Ovary (tissue), 10 donors: ENCODE measurements at regions of chr15 and their contacts with region 1.

Region 1: DNA sequence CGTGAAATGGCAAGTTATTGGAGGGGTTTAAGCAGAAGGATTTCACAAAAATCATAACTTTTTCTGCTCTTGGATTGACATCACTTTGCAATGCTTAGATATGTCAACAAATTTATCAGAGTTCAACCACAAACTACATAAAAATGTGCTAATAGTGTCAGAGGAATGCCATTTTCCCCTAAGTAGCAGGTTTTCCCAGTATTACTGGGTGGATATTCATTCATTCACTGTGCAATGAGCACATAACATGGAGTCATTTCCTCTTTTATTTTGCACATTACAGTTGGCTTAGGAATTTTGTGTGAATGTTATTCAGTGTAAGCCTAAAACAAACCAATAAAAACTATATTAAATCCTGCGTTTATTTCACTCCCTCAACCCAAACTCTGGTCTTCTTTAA is 537.3 kb upstream of the MCTP2 start:
- DNase-seq: no peak
- H3K4me3 ChIP-seq: no peak overlapping the region
- H3K27ac ChIP-seq: no peak overlapping the region
- H3K4me1 ChIP-seq: no peaks in the 10 kb centered on the region
- H3K27me3 ChIP-seq: no peaks in the 10 kb centered on the region
- CTCF ChIP-seq: no peak
- EP300 ChIP-seq: no peak
- POLR2A ChIP-seq: no peak

Region 2: DNA sequence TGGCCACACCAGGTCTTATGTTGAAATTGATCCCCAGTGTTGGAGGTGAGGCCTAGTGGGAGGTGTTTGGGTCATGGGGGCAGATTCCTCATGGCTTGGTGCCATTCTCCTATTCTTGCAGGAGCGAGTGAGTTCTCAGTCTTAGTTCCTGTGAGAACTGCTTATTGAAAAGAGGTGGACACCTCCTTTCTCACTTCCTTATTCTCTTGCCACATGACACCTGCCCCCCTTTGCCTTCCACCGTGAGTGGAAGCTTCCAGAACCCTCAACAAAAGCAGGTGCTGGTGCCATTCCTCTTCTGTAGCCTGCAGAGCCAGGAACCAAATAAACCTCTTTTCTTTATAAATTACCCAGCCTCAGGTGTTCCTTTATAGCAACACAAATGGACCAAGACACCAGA is 219.3 kb after region 1 on chr15:
- intact Hi-C with region 1: no loop called
- DNase-seq: no peak
- H3K4me3 ChIP-seq: no peak overlapping the region
- H3K27ac ChIP-seq: no peak overlapping the region
- H3K4me1 ChIP-seq: no peaks in the 10 kb centered on the region
- H3K27me3 ChIP-seq: no peaks in the 10 kb centered on the region
- CTCF ChIP-seq: no peak
- EP300 ChIP-seq: no peak
- POLR2A ChIP-seq: no peak

Region 3: DNA sequence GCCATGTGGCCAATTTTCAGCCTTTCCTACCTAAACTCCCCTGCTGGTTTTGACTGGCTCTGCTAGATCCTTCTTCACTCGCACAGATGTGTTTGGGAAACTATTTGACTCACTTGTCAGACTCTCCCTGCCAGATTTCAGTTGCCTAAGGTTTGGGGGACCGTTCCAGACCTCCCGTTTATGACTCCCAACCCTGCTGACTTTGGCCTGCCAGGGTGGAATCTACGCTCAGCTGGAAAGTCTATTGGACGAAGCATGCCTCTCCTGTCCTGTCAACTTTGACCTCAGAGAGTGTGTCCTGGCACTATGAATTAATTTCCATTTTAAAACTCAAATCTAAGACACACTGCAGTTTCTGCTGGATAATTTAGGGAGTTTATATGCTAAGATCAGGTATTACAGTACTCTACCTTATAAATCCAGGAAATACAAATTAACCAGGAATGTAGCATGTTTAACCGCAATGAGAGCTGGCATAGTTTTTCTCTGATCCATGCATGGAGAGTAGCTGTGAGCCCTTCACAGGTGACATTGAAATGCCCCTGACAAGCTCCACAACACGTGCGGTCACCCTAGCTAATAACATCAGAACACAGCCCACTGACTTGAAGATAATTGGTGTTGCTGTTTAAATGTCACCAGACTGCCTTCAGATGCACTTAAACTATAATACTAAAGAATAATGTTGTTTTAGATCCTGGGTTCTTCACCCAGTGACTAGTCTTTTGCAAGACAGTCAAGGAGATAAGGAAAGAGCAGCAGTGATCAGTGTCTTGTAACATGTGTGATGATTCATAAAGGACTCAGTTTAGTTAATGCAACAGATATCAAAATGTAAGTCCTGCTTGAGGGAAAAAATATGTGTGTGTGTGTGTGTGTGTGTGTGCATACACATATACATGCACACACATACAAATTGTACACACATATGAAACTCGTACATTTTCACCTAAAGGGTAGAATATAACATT is 314.4 kb after region 1 on chr15:
- intact Hi-C with region 1: no loop called
- DNase-seq: no peak
- H3K4me3 ChIP-seq: no peak overlapping the region
- H3K27ac ChIP-seq: no peak overlapping the region
- H3K4me1 ChIP-seq: peaks cover 2% of the 10 kb centered on the region
- H3K27me3 ChIP-seq: no peaks in the 10 kb centered on the region
- CTCF ChIP-seq: no peak
- EP300 ChIP-seq: no peak
- POLR2A ChIP-seq: no peak

Region 4: GRCh38 chr15:94026458-94027304 is 332.6 kb after region 1 on chr15:
- intact Hi-C with region 1: loop called in 1 of 4 experiments (anchors 10 kb)
- DNase-seq: no peak
- H3K4me3 ChIP-seq: no peak overlapping the region
- H3K27ac ChIP-seq: no peak overlapping the region
- H3K4me1 ChIP-seq: peaks cover 4% of the 10 kb centered on the region
- H3K27me3 ChIP-seq: no peaks in the 10 kb centered on the region
- CTCF ChIP-seq: no peak
- EP300 ChIP-seq: no peak
- POLR2A ChIP-seq: no peak